GM12878 (cell line): ENCODE measurements at regions of chr2 and their contacts with region 1.

Region 1: GRCh38 chr2:198905881-198906612 is 551.7 kb downstream of the SATB2 start:
- DNase-seq: peak; percentile 45
- ATAC-seq: peak; percentile 91
- H3K4me3 ChIP-seq: no peak overlapping the region
- H3K27ac ChIP-seq: no peak overlapping the region
- H3K4me1 ChIP-seq: peaks cover 9% of the 10 kb centered on the region
- H3K27me3 ChIP-seq: no peaks in the 10 kb centered on the region
- CTCF ChIP-seq: no peak
- EP300 ChIP-seq: peak; percentile 69 to 73; a peak in 3 of 4 replicates
- POLR2A ChIP-seq: no peak
- RAD21 ChIP-seq: no peak

Region 2: DNA sequence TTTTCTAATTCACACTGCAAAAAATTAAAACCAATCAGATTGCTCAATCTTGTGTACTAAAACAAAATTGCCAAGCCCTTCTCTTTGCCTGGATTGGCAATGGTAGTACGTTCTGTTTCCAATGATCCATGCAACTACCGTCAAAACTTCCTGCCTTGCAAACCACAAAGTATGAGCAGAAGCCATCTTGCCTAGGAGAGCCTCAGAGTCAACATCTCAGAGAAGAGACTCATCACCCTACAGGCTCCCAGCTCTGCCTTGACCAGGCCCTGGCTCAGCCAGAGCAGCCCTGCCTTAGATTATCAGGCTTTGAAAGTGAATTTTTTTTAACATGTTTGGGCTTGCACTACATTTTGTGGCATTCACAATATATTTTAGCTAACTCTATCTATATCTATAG is 22.4 kb before region 1 on chr2:
- CTCF ChIA-PET with region 1: no interaction called
- POLR2A ChIA-PET with region 1: interaction called, 3 read pairs
- RAD21 ChIA-PET with region 1: interaction called, 5 read pairs
- SMC1A ChIA-PET with region 1: interaction called, 16 read pairs
- in situ Hi-C with region 1: no loop called
- intact Hi-C with region 1: no loop called
- DNase-seq: no peak
- ATAC-seq: no peak
- H3K4me3 ChIP-seq: no peak overlapping the region
- H3K27ac ChIP-seq: no peak overlapping the region
- H3K4me1 ChIP-seq: no peaks in the 10 kb centered on the region
- H3K27me3 ChIP-seq: no peaks in the 10 kb centered on the region
- CTCF ChIP-seq: no peak
- EP300 ChIP-seq: no peak
- POLR2A ChIP-seq: no peak
- RAD21 ChIP-seq: no peak

Region 3: GRCh38 chr2:198890490-198890889 is 15.6 kb before region 1 on chr2:
- CTCF ChIA-PET with region 1: interaction called, 4 read pairs
- POLR2A ChIA-PET with region 1: no interaction called
- RAD21 ChIA-PET with region 1: interaction called, 10 read pairs
- SMC1A ChIA-PET with region 1: interaction called, 69 read pairs
- in situ Hi-C with region 1: no loop called
- intact Hi-C with region 1: no loop called
- DNase-seq: no peak
- ATAC-seq: peak; percentile 95
- H3K4me3 ChIP-seq: no peak overlapping the region
- H3K27ac ChIP-seq: no peak overlapping the region
- H3K4me1 ChIP-seq: no peaks in the 10 kb centered on the region
- H3K27me3 ChIP-seq: no peaks in the 10 kb centered on the region
- CTCF ChIP-seq: no peak
- EP300 ChIP-seq: peak; percentile 70 to 72; a peak in 2 of 4 replicates
- POLR2A ChIP-seq: no peak
- RAD21 ChIP-seq: no peak

Region 4: DNA sequence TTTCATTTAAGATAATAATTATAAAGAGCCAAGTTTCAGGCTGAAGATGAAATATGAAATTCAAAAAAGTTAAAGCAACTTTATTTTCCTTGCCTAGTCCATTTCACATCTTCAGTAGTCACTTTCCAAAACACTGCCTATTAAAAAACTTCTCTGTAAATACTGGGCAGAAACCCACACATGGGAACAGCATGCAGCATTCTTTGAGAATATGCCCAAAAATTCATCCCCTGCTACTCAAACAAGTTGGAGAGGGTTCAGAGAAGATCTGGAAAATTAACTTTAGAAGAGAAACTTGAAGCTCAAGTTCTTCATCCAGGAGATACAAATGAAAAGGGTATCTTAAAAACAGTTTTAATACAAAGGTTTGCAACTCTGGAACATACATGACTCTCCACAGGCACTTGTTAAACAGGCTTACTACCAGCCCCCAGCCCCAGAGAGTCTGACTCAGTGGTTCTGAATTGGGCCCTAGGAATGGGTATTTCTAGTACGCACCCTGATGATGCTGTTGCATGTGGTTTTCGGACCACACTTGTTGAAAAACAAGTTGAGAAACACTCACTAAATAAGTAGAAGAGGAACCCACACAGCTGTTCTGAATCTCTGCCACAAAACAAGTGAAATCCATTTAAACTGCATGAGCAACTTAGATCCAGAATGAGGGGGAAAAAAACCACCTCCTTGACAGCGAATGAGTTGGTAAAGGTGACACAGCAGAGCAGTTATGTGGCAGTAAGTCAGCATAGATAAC is 222.6 kb after region 1 on chr2:
- CTCF ChIA-PET with region 1: no interaction called
- POLR2A ChIA-PET with region 1: no interaction called
- RAD21 ChIA-PET with region 1: no interaction called
- SMC1A ChIA-PET with region 1: no interaction called
- in situ Hi-C with region 1: no loop called
- intact Hi-C with region 1: no loop called
- DNase-seq: no peak
- ATAC-seq: no peak; the same call in 2 of the 3 replicates
- H3K4me3 ChIP-seq: no peak overlapping the region
- H3K27ac ChIP-seq: no peak overlapping the region
- H3K4me1 ChIP-seq: no peaks in the 10 kb centered on the region
- H3K27me3 ChIP-seq: no peaks in the 10 kb centered on the region; a peak in 1 of 4 replicates
- CTCF ChIP-seq: no peak
- EP300 ChIP-seq: no peak
- POLR2A ChIP-seq: no peak
- RAD21 ChIP-seq: no peak